ENCODE measurements at regions of chr3 and their contacts with region 1.

Region 1: GRCh38 chr3:27467545-27467944 is 16.6 kb downstream of the SLC4A7 start:
- DNase-seq: no peak
- ATAC-seq: peak; percentile 88
- H3K4me3 Mint-ChIP-seq: no peak overlapping the region
- H3K27ac Mint-ChIP-seq: no peak overlapping the region
- H3K4me1 Mint-ChIP-seq: peaks cover 22% of the 10 kb centered on the region
- H3K27me3 Mint-ChIP-seq: no peaks in the 10 kb centered on the region
- CTCF ChIP-seq: no peak

Region 2: GRCh38 chr3:26807272-26807671 is 660.3 kb before region 1 on chr3:
- CTCF ChIA-PET with region 1: no interaction called
- POLR2A ChIA-PET with region 1: no interaction called
- intact Hi-C with region 1: no loop called
- DNase-seq: no peak
- ATAC-seq: no peak
- H3K4me3 Mint-ChIP-seq: no peak overlapping the region
- H3K27ac Mint-ChIP-seq: no peak overlapping the region
- H3K4me1 Mint-ChIP-seq: no peaks in the 10 kb centered on the region
- H3K27me3 Mint-ChIP-seq: no peaks in the 10 kb centered on the region
- CTCF ChIP-seq: no peak

Region 3: GRCh38 chr3:27134165-27134796 is 333.3 kb before region 1 on chr3:
- CTCF ChIA-PET with region 1: interaction called, 6 read pairs
- POLR2A ChIA-PET with region 1: no interaction called
- intact Hi-C with region 1: loop called (anchors 1 kb)
- DNase-seq: peak; percentile 27
- ATAC-seq: peak; percentile 71
- H3K4me3 Mint-ChIP-seq: no peak overlapping the region
- H3K27ac Mint-ChIP-seq: no peak overlapping the region
- H3K4me1 Mint-ChIP-seq: no peaks in the 10 kb centered on the region
- H3K27me3 Mint-ChIP-seq: no peaks in the 10 kb centered on the region
- CTCF ChIP-seq: peak; percentile 83

Region 4: GRCh38 chr3:27312044-27312668 is 155.4 kb before region 1 on chr3:
- CTCF ChIA-PET with region 1: interaction called, 7 read pairs
- POLR2A ChIA-PET with region 1: no interaction called
- intact Hi-C with region 1: loop called (anchors 1 kb)
- DNase-seq: no peak
- ATAC-seq: peak; percentile 70
- H3K4me3 Mint-ChIP-seq: no peak overlapping the region
- H3K27ac Mint-ChIP-seq: no peak overlapping the region
- H3K4me1 Mint-ChIP-seq: no peaks in the 10 kb centered on the region
- H3K27me3 Mint-ChIP-seq: no peaks in the 10 kb centered on the region
- CTCF ChIP-seq: peak; percentile 35

Region 5: GRCh38 chr3:28348629-28349483 is 881.3 kb after region 1 on chr3 and contains the starts of genes AZI2 and ZCWPW2:
- CTCF ChIA-PET with region 1: no interaction called
- POLR2A ChIA-PET with region 1: no interaction called
- intact Hi-C with region 1: loop called (anchors 5 kb)
- DNase-seq: peak; percentile 93
- ATAC-seq: peak; percentile 89
- H3K4me3 Mint-ChIP-seq: peak within 1 kb of the TSS; percentile 97
- H3K27ac Mint-ChIP-seq: peak within 1 kb of the TSS; percentile 97
- H3K4me1 Mint-ChIP-seq: peaks cover 43% of the 10 kb centered on the region
- H3K27me3 Mint-ChIP-seq: no peaks in the 10 kb centered on the region
- CTCF ChIP-seq: no peak
- total RNA-seq, gene AZI2: 20.8 and 21.8 TPM in 2 replicates
- total RNA-seq, gene ZCWPW2: not detected in 2 replicates

Region 6: GRCh38 chr3:28612232-28612631 is 1144.7 kb after region 1 on chr3:
- CTCF ChIA-PET with region 1: no interaction called
- POLR2A ChIA-PET with region 1: no interaction called
- intact Hi-C with region 1: no loop called
- DNase-seq: no peak
- ATAC-seq: no peak
- H3K4me3 Mint-ChIP-seq: no peak overlapping the region
- H3K27ac Mint-ChIP-seq: no peak overlapping the region
- H3K4me1 Mint-ChIP-seq: no peaks in the 10 kb centered on the region
- H3K27me3 Mint-ChIP-seq: no peaks in the 10 kb centered on the region
- CTCF ChIP-seq: no peak